Thyroid gland (tissue), 4 donors: ENCODE measurements at regions of chr5 and their contacts with region 1.

Region 1: GRCh38 chr5:142869883-142870282 is 99.7 kb downstream of the ARHGAP26 start:
- DNase-seq: peak; percentile 84 to 89
- H3K4me3 ChIP-seq: no peak overlapping the region
- H3K27ac ChIP-seq: peak overlapping the region; percentile 64 to 76 (median 73)
- H3K4me1 ChIP-seq: peaks cover 38 to 75% of the 10 kb centered on the region in 2 donors
- H3K27me3 ChIP-seq: no peaks in the 10 kb centered on the region
- CTCF ChIP-seq: no peak
- POLR2A ChIP-seq: no peak

Region 2: DNA sequence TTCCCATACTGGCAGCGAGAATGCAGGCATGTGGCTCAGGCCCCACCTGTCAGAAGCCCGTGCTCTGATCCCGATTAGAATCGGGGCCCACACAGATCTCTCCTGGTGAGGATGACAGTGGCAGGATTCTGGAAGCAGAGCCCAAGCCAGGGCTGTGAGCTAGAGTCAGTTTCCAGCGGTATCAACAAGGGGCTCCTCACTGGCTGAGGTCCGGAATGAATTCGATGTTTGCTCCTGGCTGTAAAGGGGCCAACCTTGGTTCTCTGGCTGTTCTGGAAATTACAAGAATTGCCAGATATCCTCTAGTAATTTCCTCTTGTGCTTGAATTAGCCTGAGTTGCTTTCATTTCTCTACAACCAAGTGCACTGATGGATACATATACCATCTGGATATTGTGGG is 416.0 kb before region 1 on chr5:
- intact Hi-C with region 1: no loop called
- DNase-seq: no peak
- H3K4me3 ChIP-seq: no peak overlapping the region
- H3K27ac ChIP-seq: no peak overlapping the region
- H3K4me1 ChIP-seq: no peaks in the 10 kb centered on the region
- H3K27me3 ChIP-seq: no peaks in the 10 kb centered on the region
- CTCF ChIP-seq: no peak
- POLR2A ChIP-seq: peak in 1 of 2 donors; percentile 7

Region 3: GRCh38 chr5:142769741-142770631 is 99.9 kb before region 1 on chr5 and contains the start of gene ARHGAP26:
- intact Hi-C with region 1: loop called (anchors 5 kb)
- DNase-seq: peak; percentile 98
- H3K4me3 ChIP-seq: peak within 1 kb of the TSS; percentile 80 to 91 (median 82)
- H3K27ac ChIP-seq: peak within 1 kb of the TSS; percentile 64 to 86 (median 85)
- H3K4me1 ChIP-seq: peaks cover 12 to 23% of the 10 kb centered on the region in 2 donors
- H3K27me3 ChIP-seq: no peaks in the 10 kb centered on the region
- CTCF ChIP-seq: peak in 5 of 6 experiments; percentile 8 to 28 (median 21)
- POLR2A ChIP-seq: peak; percentile 98 to 100
- total RNA-seq, gene ARHGAP26: 28.2 to 52.3 (median 37.9) TPM